ENCODE measurements at regions of chr10 and their contacts with region 1.

Region 1: GRCh38 chr10:33453081-33454025 is 118.9 kb upstream of the NRP1 start:
- DNase-seq: no peak
- ATAC-seq: no peak
- H3K4me3 ChIP-seq: no peak overlapping the region
- H3K27ac ChIP-seq: no peak overlapping the region
- H3K4me1 ChIP-seq: no peaks in the 10 kb centered on the region
- H3K27me3 ChIP-seq: no peaks in the 10 kb centered on the region
- CTCF ChIP-seq: no peak

Region 2: GRCh38 chr10:33314811-33315561 is 138.4 kb before region 1 on chr10:
- intact Hi-C with region 1: no loop called
- DNase-seq: no peak
- ATAC-seq: no peak
- H3K4me3 ChIP-seq: no peak overlapping the region
- H3K27ac ChIP-seq: peak overlapping the region in 6 of 10 donors; percentile 35 to 99 (median 52)
- H3K4me1 ChIP-seq: peaks cover 37 to 100% (median 90%) of the 10 kb centered on the region in 9 donors
- H3K27me3 ChIP-seq: no peaks in the 10 kb centered on the region
- CTCF ChIP-seq: no peak

Region 3: GRCh38 chr10:33341637-33342036 is 111.7 kb before region 1 on chr10:
- intact Hi-C with region 1: loop called in 2 of 10 experiments (anchors 10 kb)
- DNase-seq: no peak
- ATAC-seq: no peak
- H3K4me3 ChIP-seq: peak overlapping the region in 6 of 10 donors; percentile 9 to 33 (median 18)
- H3K27ac ChIP-seq: peak overlapping the region in 8 of 10 donors; percentile 2 to 56 (median 47)
- H3K4me1 ChIP-seq: peaks cover 0 to 54% (median 38%) of the 10 kb centered on the region in 9 donors
- H3K27me3 ChIP-seq: peaks cover 0 to 7% (median 0%) of the 10 kb centered on the region in 7 donors
- CTCF ChIP-seq: no peak

Region 4: DNA sequence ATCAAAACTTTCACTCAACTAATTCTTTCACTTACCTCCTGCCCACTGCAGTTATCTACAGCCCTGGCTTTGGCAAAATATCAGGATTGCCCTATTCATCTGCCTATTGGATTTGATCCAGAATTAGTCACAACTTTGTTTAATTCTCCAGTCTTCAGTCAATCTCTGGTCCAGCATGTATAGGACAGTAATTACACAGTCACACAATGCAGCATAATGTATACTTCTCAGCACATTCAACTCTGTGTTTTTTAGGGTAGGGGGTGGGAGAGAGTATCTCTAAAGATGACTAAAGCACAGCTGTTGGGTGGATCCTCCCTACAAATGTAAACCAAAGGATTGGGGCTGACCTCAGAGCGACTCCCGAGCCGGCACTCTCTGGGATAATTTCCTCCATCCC is 101.2 kb before region 1 on chr10:
- intact Hi-C with region 1: loop called in 3 of 10 experiments (anchors 10 kb)
- DNase-seq: no peak
- ATAC-seq: no peak
- H3K4me3 ChIP-seq: no peak overlapping the region
- H3K27ac ChIP-seq: no peak overlapping the region
- H3K4me1 ChIP-seq: peaks cover 0 to 41% (median 10%) of the 10 kb centered on the region in 9 donors
- H3K27me3 ChIP-seq: no peaks in the 10 kb centered on the region
- CTCF ChIP-seq: no peak

Region 5: GRCh38 chr10:33412653-33413361 is 40.5 kb before region 1 on chr10:
- intact Hi-C with region 1: no loop called
- DNase-seq: no peak
- ATAC-seq: peak in 7 of 8 donors; percentile 46 to 95 (median 57)
- H3K4me3 ChIP-seq: no peak overlapping the region
- H3K27ac ChIP-seq: peak overlapping the region in 1 of 10 donors; percentile 41
- H3K4me1 ChIP-seq: peaks cover 0 to 19% (median 6%) of the 10 kb centered on the region in 9 donors
- H3K27me3 ChIP-seq: no peaks in the 10 kb centered on the region
- CTCF ChIP-seq: no peak

Measured in heart right ventricle (tissue), 16 donors.